MCF 10A (cell line): ENCODE measurements at regions of chr18 and their contacts with region 1.

Region 1: GRCh38 chr18:73124175-73124574 is 256.4 kb upstream of the NETO1 start:
- DNase-seq: no peak
- H3K4me3 Mint-ChIP-seq: no peak overlapping the region
- H3K27ac Mint-ChIP-seq: no peak overlapping the region
- H3K4me1 Mint-ChIP-seq: no peaks in the 10 kb centered on the region
- H3K27me3 Mint-ChIP-seq: no peaks in the 10 kb centered on the region
- CTCF ChIP-seq: no peak

Region 2: GRCh38 chr18:71743634-71744033 is 1380.5 kb before region 1 on chr18:
- CTCF ChIA-PET with region 1: no interaction called
- POLR2A ChIA-PET with region 1: no interaction called
- intact Hi-C with region 1: no loop called
- DNase-seq: peak; percentile 6
- H3K4me3 Mint-ChIP-seq: no peak overlapping the region
- H3K27ac Mint-ChIP-seq: no peak overlapping the region
- H3K4me1 Mint-ChIP-seq: no peaks in the 10 kb centered on the region
- H3K27me3 Mint-ChIP-seq: peaks cover 12% of the 10 kb centered on the region
- CTCF ChIP-seq: no peak

Region 3: GRCh38 chr18:73144030-73144429 is 19.9 kb after region 1 on chr18:
- CTCF ChIA-PET with region 1: no interaction called
- POLR2A ChIA-PET with region 1: no interaction called
- intact Hi-C with region 1: loop called (anchors 1 kb)
- DNase-seq: no peak
- H3K4me3 Mint-ChIP-seq: no peak overlapping the region
- H3K27ac Mint-ChIP-seq: no peak overlapping the region
- H3K4me1 Mint-ChIP-seq: no peaks in the 10 kb centered on the region
- H3K27me3 Mint-ChIP-seq: no peaks in the 10 kb centered on the region
- CTCF ChIP-seq: no peak